A549 (cell line): ENCODE measurements at regions of chr17 and their contacts with region 1.

Region 1: GRCh38 chr17:49567871-49568694 is 7.6 kb upstream of the NXPH3 start:
- DNase-seq: peak; percentile 78 to 92
- ATAC-seq: peak; percentile 63 to 84
- H3K4me3 ChIP-seq: peak overlapping the region; percentile 48
- H3K27ac ChIP-seq: peak overlapping the region; percentile 61 to 82; a peak in 5 of 6 replicates
- H3K4me1 ChIP-seq: no peaks in the 10 kb centered on the region; the same call in 2 of the 3 replicates
- CTCF ChIP-seq: peak; percentile 97
- EP300 ChIP-seq: no peak
- POLR2A ChIP-seq: no peak
- RAD21 ChIP-seq: peak; percentile 99

Region 2: DNA sequence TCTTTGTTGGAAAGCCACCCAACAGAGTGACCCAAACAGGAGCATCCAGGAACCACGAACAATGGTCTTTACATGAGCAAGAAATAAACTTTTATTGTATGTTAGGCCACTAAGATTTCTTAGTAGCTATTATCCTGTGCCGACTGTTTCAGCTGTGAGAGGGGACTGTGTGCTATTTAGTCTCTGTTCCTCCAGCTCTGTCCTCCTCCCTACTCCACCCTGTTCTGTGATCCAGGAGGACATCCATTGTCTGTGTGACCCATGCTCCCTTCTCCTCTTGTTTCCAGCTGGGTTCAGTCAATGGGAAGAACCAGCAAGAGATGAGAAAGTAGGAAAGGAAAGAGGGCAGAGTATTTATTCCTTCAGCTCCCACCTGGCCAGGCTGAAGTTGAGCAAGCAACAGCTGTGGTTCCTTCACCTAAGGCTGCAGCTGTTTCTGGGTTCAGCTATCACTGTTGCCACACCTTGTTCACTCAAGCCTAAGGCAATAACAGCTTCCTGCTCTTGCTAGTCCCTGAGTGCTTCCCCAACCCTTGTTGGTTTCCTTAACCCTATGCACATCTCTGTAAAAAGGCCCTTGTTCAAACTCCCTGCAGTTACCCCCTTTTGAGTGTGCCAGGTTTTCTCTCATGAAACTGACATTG is 450.4 kb before region 1 on chr17:
- CTCF ChIA-PET with region 1: no interaction called
- POLR2A ChIA-PET with region 1: no interaction called
- DNase-seq: no peak
- ATAC-seq: no peak
- H3K4me3 ChIP-seq: no peak overlapping the region
- H3K27ac ChIP-seq: 0 out of 6 replicates have a peak overlapping the region, but pooled peaks of 1 of the 2 experiments have one; percentile 6
- H3K4me1 ChIP-seq: no peaks in the 10 kb centered on the region
- CTCF ChIP-seq: no peak
- EP300 ChIP-seq: no peak
- POLR2A ChIP-seq: no peak
- RAD21 ChIP-seq: no peak

Region 3: GRCh38 chr17:49217651-49218413 is 350.3 kb before region 1 on chr17:
- CTCF ChIA-PET with region 1: no interaction called
- POLR2A ChIA-PET with region 1: no interaction called
- DNase-seq: no peak
- ATAC-seq: no peak
- H3K4me3 ChIP-seq: no peak overlapping the region
- H3K27ac ChIP-seq: peak overlapping the region in 1 of 2 experiments; percentile 21; a peak in 1 of 6 replicates
- H3K4me1 ChIP-seq: peaks cover 5% of the 10 kb centered on the region; the same call in 1 of the 3 replicates
- CTCF ChIP-seq: no peak
- EP300 ChIP-seq: no peak
- POLR2A ChIP-seq: no peak
- RAD21 ChIP-seq: no peak

Region 4: DNA sequence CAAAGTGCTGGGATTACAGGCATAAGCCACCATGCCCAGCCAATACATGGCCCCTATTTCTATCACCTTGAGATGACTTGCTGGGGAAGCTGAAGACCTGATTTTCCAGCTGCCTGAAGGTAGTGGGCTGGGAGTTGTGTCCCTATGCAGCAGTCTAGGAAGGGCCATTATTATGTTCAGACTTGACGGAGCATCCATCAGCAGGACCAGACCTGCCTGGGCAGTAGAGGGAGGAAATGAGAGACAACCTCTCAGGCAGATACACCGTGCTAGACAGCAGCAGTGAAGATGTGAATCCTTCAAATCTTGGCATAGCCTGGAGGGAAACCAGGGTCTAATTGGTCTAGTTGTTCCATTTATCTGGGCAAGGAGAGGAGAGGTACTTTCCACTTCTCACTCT is 301.9 kb before region 1 on chr17:
- CTCF ChIA-PET with region 1: no interaction called
- POLR2A ChIA-PET with region 1: no interaction called
- DNase-seq: no peak
- ATAC-seq: peak in 1 of 2 experiments; percentile 51; a peak in 1 of 6 replicates
- H3K4me3 ChIP-seq: no peak overlapping the region
- H3K27ac ChIP-seq: no peak overlapping the region
- H3K4me1 ChIP-seq: no peaks in the 10 kb centered on the region; the same call in 2 of the 3 replicates
- CTCF ChIP-seq: no peak
- EP300 ChIP-seq: no peak
- POLR2A ChIP-seq: no peak
- RAD21 ChIP-seq: no peak

Region 5: DNA sequence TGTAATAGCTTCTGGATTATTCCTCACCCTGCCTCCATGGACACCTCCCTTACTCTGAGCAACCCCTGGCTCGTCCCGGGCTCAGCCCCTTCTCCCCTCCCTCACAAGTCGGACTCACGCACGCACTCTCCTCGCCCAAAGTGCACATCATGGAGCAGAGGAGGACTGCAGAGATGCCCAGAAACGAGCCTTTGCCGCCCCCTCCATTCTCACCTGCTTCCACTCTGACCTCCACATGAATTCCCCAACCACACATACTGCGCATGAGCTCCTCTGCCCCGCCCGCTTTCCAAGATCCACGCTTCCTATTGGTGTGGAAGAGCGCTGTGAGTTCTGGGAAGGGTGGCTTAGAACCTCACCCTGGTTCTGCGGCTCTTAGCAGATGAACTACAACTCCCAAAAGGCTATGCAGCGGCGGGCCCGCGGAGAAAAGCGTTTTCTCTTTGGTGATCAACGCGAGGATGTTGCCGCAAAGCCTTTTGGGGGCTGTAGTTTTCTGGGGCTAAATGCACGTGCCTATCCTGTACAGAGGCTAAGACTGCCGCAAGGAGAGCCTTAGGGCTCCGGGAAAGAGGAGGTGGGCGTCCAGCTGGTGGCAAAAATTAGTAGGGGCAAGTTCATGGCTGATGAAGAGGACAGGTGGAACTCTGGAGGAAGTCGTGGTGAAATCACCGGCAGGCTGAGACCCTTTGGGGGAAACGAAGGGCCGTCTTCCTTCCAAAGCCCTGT is 153.3 kb before region 1 on chr17 and contains the start of gene PHB1:
- CTCF ChIA-PET with region 1: interaction called, 563 read pairs
- POLR2A ChIA-PET with region 1: no interaction called
- DNase-seq: peak; percentile 98 to 100
- ATAC-seq: peak; percentile 100
- H3K4me3 ChIP-seq: peak within 1 kb of the TSS; percentile 69
- H3K27ac ChIP-seq: peak within 1 kb of the TSS; percentile 76 to 90
- H3K4me1 ChIP-seq: peaks cover 11% of the 10 kb centered on the region
- CTCF ChIP-seq: no peak
- EP300 ChIP-seq: no peak
- POLR2A ChIP-seq: peak; percentile 89
- RAD21 ChIP-seq: no peak
- polyA plus RNA-seq, gene PHB1: 480 and 556 TPM in 2 replicates

Region 6: DNA sequence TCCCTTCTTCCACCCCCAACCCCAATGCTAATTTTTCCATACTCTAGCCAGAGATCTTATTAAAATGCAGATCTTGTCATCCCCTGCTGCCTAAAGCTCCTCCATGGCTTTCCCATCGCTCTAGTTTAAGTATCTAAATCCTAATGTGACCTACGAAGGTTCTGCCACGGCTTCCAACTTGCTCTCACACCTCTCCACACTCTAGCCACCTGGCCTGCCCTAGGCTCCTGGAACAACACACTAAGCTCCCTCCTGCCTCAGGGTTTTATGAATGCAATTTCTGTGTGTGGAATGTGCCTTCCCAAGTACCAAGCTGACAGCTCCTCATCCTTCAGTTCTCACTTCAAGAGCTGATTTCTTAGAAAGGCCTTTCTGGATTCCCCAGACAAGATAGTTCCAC is 24.2 kb after region 1 on chr17:
- CTCF ChIA-PET with region 1: interaction called, 21 read pairs
- POLR2A ChIA-PET with region 1: no interaction called
- DNase-seq: no peak
- ATAC-seq: no peak
- H3K4me3 ChIP-seq: no peak overlapping the region
- H3K27ac ChIP-seq: no peak overlapping the region
- H3K4me1 ChIP-seq: no peaks in the 10 kb centered on the region
- CTCF ChIP-seq: no peak
- EP300 ChIP-seq: no peak
- POLR2A ChIP-seq: no peak
- RAD21 ChIP-seq: no peak

Region 7: GRCh38 chr17:49616601-49617131 is 48.6 kb after region 1 on chr17:
- CTCF ChIA-PET with region 1: interaction called, 15 read pairs
- POLR2A ChIA-PET with region 1: no interaction called
- DNase-seq: no peak
- ATAC-seq: no peak
- H3K4me3 ChIP-seq: no peak overlapping the region
- H3K27ac ChIP-seq: no peak overlapping the region
- H3K4me1 ChIP-seq: no peaks in the 10 kb centered on the region
- CTCF ChIP-seq: no peak
- EP300 ChIP-seq: no peak
- POLR2A ChIP-seq: no peak
- RAD21 ChIP-seq: no peak

Region 8: DNA sequence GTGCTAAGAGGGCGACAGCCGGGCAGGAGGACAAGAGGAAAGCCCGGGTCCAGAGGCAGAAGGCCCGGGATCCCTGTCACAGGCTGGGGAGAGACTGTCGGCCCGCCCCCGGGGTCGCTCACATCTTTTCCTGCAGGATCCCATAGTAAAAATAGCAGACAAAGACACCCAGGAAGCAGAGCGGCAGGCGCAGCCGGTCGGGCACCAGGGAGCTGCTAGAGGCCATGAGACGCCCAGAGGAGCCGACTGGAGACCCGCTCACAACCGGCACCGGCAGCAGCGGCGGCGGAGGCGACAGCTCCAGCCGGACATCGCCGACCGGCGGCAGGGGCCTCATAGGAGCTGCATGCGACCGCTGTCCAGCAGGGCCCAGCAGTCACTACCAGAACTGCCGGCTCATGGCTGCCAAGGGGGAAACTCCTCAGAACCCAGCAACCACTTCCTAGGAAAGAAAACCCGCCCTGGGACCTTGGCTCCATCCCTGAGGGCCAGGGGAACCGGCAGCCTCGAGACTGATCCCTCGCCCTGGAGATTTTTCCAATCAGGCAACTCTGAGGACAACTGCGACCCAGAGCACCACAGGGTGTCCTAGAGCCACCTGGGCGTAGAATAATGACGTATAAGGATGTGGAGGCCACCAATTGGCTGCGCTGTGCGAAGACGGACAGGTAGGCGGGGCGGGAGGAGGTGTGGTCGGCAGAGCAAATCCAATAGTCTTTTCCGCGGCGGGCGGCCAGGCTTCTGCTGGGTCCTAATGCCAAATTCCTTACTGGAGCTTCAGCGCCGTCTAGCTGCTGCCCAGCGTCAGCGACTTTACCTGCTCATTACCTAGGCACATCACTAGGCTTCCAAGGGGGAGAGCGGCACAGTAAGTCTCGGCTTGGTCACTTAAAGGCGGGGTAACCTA is 139.8 kb after region 1 on chr17 and contains the start of gene SLC35B1:
- CTCF ChIA-PET with region 1: interaction called, 2,008 read pairs
- POLR2A ChIA-PET with region 1: interaction called, 6 read pairs
- DNase-seq: peak; percentile 100
- ATAC-seq: peak; percentile 97 to 99
- H3K4me3 ChIP-seq: peak within 1 kb of the TSS; percentile 87
- H3K27ac ChIP-seq: peak within 1 kb of the TSS; percentile 90
- H3K4me1 ChIP-seq: peaks cover 10% of the 10 kb centered on the region
- CTCF ChIP-seq: peak; percentile 96
- EP300 ChIP-seq: 0 out of 5 replicates have a peak, but pooled peaks of 1 of the 2 experiments have one; percentile 25
- POLR2A ChIP-seq: peak; percentile 75
- RAD21 ChIP-seq: peak; percentile 63 to 68
- polyA plus RNA-seq, gene SLC35B1: 191 and 287 TPM in 2 replicates

Region 9: DNA sequence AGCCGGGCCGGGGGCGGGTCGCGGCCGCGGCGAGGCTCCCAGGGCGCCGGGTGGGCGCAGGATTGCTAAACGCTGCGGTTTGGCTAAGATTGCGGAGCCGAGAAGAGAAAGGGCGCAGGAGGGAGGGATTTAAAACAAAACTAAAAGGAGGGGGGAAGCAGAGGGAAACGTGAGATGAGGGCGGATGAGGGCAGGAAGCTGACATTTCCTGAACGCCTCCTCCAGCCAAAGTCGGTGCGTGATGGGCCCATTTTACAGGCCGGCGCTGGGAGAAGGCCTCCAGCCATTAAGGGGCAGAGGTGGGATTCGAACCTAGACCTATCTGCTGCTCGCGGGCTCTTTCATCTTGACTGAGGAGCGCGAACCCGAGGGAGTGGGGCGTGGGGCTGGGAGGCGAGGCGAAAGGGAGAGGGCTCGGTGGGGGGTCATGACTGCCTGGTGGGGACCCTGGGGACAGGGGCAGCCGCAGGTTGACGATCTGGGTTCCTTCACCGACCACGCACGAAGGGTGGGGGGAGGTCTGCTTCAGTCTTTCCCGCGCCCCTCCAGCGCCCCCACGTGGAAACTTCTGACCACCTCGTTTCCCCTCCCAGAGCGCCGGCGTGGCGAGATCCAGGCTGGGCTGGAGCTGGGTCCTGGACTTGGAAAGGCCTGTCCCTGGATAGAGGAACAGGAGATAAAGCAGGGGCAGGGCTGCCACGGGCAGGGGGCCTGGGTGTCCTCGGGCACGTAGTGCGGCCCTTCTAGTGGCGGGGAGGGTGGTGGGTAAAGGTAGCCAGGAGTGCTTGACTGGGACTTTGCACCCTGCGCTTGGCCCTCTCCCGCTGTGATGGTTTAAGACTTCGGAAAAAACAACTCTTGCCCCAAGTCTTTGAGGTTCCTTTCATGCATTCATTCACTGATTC is 283.6 kb after region 1 on chr17:
- CTCF ChIA-PET with region 1: interaction called, 12 read pairs
- POLR2A ChIA-PET with region 1: no interaction called
- DNase-seq: peak; percentile 66 to 73
- ATAC-seq: peak; percentile 72 to 88
- H3K4me3 ChIP-seq: peak overlapping the region; percentile 72
- H3K27ac ChIP-seq: peak overlapping the region; percentile 79 to 91
- H3K4me1 ChIP-seq: peaks cover 3% of the 10 kb centered on the region; the same call in 1 of the 3 replicates
- CTCF ChIP-seq: peak; percentile 90
- EP300 ChIP-seq: no peak
- POLR2A ChIP-seq: no peak
- RAD21 ChIP-seq: peak; percentile 84 to 89